ENCODE measurements at regions of chr6 and their contacts with region 1.

Region 1: GRCh38 chr6:70821751-70822150 is 135.1 kb downstream of the B3GAT2 start:
- DNase-seq: no peak
- H3K4me3 Mint-ChIP-seq: no peak overlapping the region
- H3K27ac Mint-ChIP-seq: no peak overlapping the region
- H3K4me1 Mint-ChIP-seq: no peaks in the 10 kb centered on the region
- H3K27me3 Mint-ChIP-seq: no peaks in the 10 kb centered on the region

Region 2: DNA sequence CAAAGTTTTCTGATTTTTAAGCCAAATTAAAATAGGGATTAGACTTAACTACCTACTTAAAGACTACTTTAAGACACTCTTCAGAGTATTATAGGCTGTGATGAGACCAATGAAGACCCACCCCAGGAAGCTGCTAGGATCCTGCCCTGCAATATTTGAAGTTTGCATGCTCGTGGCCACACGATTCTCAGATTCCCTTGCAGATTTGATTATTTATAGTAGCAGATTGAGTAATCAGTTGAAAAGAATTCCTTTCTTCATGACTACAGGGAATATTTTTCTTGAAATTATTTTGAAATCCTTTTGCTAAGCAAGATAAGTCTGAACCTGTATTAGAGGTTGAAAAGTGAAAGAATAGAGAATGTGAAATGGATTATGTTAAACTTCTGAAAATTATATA is 12.8 kb after region 1 on chr6:
- CTCF ChIA-PET with region 1: no interaction called
- intact Hi-C with region 1: loop called (anchors 1 kb)
- DNase-seq: no peak
- H3K4me3 Mint-ChIP-seq: no peak overlapping the region
- H3K27ac Mint-ChIP-seq: no peak overlapping the region
- H3K4me1 Mint-ChIP-seq: peaks cover 4% of the 10 kb centered on the region
- H3K27me3 Mint-ChIP-seq: no peaks in the 10 kb centered on the region

Region 3: GRCh38 chr6:72560721-72561593 is 1739.2 kb after region 1 on chr6:
- CTCF ChIA-PET with region 1: no interaction called
- intact Hi-C with region 1: no loop called
- DNase-seq: no peak
- H3K4me3 Mint-ChIP-seq: no peak overlapping the region
- H3K27ac Mint-ChIP-seq: no peak overlapping the region
- H3K4me1 Mint-ChIP-seq: no peaks in the 10 kb centered on the region
- H3K27me3 Mint-ChIP-seq: no peaks in the 10 kb centered on the region